Ovary (tissue), 10 donors: ENCODE measurements at regions of chr15 and their contacts with region 1.

Region 1: GRCh38 chr15:45604326-45604725 is 17.1 kb downstream of the BLOC1S6 start:
- DNase-seq: no peak
- H3K4me3 ChIP-seq: no peak overlapping the region
- H3K27ac ChIP-seq: no peak overlapping the region
- H3K4me1 ChIP-seq: no peaks in the 10 kb centered on the region
- H3K27me3 ChIP-seq: no peaks in the 10 kb centered on the region
- CTCF ChIP-seq: no peak
- EP300 ChIP-seq: no peak
- POLR2A ChIP-seq: no peak

Region 2: DNA sequence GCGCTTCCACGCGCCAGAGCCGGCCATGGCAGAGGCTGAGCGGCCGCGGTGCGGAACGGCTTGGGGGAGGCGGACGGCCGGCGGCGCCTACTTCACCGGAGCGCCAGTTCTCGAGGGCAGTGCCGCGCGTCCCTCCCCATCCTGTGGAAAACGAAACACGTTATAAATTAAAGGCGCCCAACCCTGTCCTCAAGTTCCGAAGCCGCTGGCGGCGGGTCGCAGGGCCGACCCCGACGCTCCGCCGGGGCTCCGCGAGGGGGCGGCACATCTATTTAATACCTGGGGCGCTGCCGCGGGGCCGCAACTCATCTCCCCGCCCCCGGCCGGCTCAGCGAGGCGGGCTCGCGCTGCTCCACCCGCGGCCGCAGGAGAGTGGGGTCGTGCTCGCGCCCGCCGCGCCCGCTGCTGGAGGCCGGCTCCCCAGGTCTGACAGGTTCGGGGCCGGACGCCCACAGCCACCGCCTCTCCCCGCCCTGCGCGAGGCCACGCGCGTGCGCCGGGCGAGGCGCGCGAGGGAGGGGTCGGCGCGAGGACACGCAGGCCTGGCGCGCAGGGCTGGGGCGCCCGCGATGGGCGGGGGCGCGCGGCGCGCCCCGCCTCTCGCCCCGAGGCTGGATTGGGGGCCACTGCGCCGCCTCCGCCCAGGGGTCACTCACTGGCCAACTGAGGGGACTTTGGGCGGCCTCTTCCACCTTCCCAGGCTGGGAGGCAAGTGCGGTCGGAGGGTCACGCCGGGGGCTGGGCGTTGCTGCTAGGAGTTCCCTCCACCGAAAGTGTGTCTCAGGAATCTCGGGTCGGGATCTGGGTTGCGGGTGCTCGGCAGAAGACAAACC is 81.8 kb before region 1 on chr15 and contains the start of gene SLC30A4:
- intact Hi-C with region 1: loop called in 1 of 4 experiments (anchors 10 kb)
- DNase-seq: peak; percentile 68 to 83 (median 72)
- H3K4me3 ChIP-seq: peak within 1 kb of the TSS; percentile 71
- H3K27ac ChIP-seq: peak within 1 kb of the TSS; percentile 77 to 82
- H3K4me1 ChIP-seq: peaks cover 3% of the 10 kb centered on the region
- H3K27me3 ChIP-seq: no peaks in the 10 kb centered on the region
- CTCF ChIP-seq: peak in 2 of 3 donors; percentile 42 to 53
- EP300 ChIP-seq: no peak
- POLR2A ChIP-seq: peak; percentile 28
- total RNA-seq, gene SLC30A4: 4.2 to 10.9 (median 8.8) TPM